MCF 10A (cell line): ENCODE measurements at regions of chr15 and their contacts with region 1.

Region 1: GRCh38 chr15:72473614-72474465 is at the start of gene ARIH1:
- DNase-seq: peak; percentile 94
- H3K4me3 Mint-ChIP-seq: peak within 1 kb of the TSS; percentile 91
- H3K27ac Mint-ChIP-seq: peak within 1 kb of the TSS; percentile 100
- H3K4me1 Mint-ChIP-seq: peaks cover 6% of the 10 kb centered on the region
- H3K27me3 Mint-ChIP-seq: no peaks in the 10 kb centered on the region
- CTCF ChIP-seq: peak; percentile 32
- total RNA-seq, gene ARIH1: 234 and 235 TPM in 2 replicates

Region 2: DNA sequence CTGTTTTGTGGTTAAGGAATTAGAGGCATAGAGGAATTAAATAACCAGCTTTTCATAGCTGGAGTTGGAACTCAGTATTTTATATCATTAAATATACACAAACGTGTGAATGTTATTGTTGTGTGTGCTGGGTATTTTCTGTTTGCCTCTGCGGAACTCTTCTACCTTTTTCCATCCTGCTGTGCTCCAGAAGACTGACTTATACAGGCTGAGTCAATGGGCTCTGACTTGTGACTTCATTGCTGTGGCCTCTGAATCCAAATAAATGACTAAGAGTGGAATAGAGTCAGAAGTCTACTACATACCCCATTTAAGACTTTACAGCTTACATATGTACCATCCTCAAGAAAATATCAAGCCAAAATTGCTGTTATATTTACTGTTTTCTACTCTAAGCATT is 17.9 kb after region 1 on chr15:
- CTCF ChIA-PET with region 1: interaction called, 4 read pairs
- POLR2A ChIA-PET with region 1: interaction called, 45 read pairs
- intact Hi-C with region 1: no loop called
- DNase-seq: peak; percentile 36
- H3K4me3 Mint-ChIP-seq: no peak overlapping the region
- H3K27ac Mint-ChIP-seq: no peak overlapping the region
- H3K4me1 Mint-ChIP-seq: peaks cover 36% of the 10 kb centered on the region
- H3K27me3 Mint-ChIP-seq: no peaks in the 10 kb centered on the region
- CTCF ChIP-seq: no peak

Region 3: DNA sequence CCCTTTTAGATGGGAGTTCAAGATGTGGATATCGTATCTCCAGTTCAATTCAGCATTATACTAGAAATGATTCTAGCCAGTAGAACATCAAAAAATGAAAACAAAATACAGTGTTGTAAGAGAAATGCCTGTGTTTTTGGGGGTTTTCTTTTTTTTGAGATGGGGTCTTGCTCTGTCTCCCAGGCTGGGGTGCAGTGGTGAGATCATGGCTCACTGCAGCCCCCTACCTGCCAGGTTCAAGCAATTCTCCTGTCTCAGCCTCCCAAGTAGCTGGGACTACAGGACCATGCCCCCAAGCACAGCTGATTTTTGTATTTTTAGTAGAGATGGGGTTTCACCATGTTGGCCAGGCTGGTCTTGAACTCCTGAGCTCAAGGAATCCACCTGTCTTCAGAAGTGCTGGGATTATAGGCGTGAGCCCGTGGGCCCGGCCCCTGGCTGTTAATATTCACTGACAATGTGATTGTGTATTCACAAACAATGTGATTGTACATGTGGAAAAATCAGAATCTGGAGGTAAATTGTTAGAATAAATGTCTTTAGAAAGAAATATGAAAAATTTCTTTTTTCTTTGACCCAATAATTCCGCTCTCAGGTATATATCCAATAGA is 59.3 kb after region 1 on chr15:
- CTCF ChIA-PET with region 1: interaction called, 3 read pairs
- POLR2A ChIA-PET with region 1: interaction called, 5 read pairs
- intact Hi-C with region 1: loop called (anchors 5 kb)
- DNase-seq: peak; percentile 8
- H3K4me3 Mint-ChIP-seq: no peak overlapping the region
- H3K27ac Mint-ChIP-seq: peak overlapping the region; percentile 19
- H3K4me1 Mint-ChIP-seq: no peaks in the 10 kb centered on the region
- H3K27me3 Mint-ChIP-seq: no peaks in the 10 kb centered on the region
- CTCF ChIP-seq: peak; percentile 38

Region 4: DNA sequence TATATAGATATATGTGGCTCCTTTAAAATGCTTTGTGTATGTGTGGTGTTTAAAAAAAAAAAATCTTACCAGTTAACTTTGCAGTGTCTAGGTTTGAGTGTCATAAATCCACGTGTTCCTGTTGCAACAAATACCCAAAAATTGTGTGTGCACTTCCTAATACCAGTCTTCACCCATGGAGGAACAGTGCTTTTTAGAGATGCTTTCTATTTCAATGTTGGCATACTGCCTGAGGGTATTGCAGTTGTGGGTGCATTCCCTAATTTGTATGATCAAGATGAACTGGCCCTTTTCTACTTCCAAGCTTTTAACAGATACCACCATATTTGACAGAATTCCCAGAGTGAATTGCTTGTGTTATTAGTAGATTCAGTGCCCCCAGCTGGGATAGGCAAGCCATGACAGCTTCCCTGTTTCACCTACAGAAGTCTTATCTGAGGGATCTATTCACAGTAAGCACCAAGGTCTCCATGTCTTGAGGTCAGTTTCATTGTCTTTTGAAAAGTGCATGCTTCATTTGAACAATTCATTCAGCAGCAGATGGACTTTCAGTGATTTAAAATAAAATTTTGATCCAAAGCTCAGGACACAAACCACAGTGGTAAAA is 111.7 kb after region 1 on chr15:
- CTCF ChIA-PET with region 1: interaction called, 4 read pairs
- POLR2A ChIA-PET with region 1: interaction called, 3 read pairs
- intact Hi-C with region 1: loop called (anchors 5 kb)
- DNase-seq: peak; percentile 22
- H3K4me3 Mint-ChIP-seq: no peak overlapping the region
- H3K27ac Mint-ChIP-seq: no peak overlapping the region
- H3K4me1 Mint-ChIP-seq: no peaks in the 10 kb centered on the region
- H3K27me3 Mint-ChIP-seq: no peaks in the 10 kb centered on the region
- CTCF ChIP-seq: no peak